ENCODE measurements at regions of chr12 and their contacts with region 1.

Region 1: DNA sequence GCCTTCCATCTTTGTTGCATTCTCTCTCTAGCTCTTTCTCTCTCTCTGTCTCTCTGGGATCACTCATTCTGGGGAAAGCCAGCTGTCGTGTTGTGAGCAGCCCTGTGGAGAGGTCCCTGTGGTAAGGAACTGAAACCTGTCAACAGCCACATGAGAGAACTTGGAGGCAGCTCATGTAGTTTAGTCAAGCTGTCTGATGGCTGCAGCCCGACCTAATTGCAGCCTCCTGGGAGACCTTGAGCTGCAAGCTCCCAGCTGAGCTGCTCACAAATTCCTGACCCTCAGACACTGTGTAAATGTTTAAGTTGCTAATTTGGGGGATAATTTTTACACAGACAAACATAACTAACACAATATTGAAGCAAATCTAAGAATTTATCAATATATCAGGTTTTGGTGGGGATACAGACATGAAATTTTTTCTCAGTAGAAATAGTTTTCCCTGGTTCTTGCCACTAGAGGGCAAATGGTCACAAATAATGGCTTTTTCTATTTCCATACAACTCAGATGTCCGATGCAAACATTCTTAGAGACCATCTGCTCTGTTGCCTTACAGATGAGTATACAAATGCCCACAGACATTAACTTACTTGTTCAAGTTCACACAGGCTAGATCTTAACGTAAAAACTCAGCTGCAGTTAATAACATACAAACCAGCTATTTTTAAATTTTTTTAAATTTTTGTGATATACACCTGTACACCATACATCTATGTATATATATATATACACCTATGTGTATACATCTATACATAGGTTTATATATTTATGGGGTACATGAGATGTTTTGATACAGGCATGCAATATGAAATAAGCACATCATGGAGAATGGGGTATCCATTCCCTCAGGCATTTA is 15.5 kb upstream of the KRR1 start:
- DNase-seq: peak; percentile 3 to 40
- H3K4me3 ChIP-seq: no peak overlapping the region
- H3K27ac ChIP-seq: no peak overlapping the region
- H3K4me1 ChIP-seq: no peaks in the 10 kb centered on the region; the same call in 1 of the 2 replicates
- H3K27me3 ChIP-seq: no peaks in the 10 kb centered on the region
- CTCF ChIP-seq: peak; percentile 82

Region 2: DNA sequence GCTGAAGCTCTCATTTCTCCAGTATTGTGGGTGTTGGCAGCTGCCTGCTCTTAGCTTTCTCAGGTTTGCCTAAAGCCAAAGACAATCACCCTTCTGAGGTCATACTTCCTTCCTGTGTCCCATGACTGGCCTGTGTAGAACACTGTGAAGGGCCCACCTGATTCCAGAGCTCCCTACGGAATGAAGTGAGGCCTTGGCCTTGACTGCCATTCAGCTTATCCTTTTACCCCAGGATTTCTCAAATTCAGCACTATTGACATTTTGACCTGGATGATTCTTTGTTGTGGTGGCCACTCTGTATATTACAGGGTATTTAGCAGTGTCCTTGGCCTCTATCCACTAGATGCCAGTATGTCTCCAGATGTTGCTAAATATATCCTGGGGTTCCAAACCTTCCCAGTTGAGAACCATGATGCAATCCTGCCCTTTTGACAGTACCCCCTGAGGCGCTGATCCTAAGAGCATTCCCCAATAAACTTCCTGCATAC is 96.8 kb after region 1 on chr12:
- CTCF ChIA-PET with region 1: no interaction called
- POLR2A ChIA-PET with region 1: no interaction called
- intact Hi-C with region 1: loop called (anchors 10 kb)
- DNase-seq: peak; percentile 33 to 69
- H3K4me3 ChIP-seq: no peak overlapping the region
- H3K27ac ChIP-seq: peak overlapping the region; percentile 62
- H3K4me1 ChIP-seq: peaks cover 16% of the 10 kb centered on the region
- H3K27me3 ChIP-seq: no peaks in the 10 kb centered on the region
- CTCF ChIP-seq: peak; percentile 54; the same call in 1 of the 2 replicates

Region 3: DNA sequence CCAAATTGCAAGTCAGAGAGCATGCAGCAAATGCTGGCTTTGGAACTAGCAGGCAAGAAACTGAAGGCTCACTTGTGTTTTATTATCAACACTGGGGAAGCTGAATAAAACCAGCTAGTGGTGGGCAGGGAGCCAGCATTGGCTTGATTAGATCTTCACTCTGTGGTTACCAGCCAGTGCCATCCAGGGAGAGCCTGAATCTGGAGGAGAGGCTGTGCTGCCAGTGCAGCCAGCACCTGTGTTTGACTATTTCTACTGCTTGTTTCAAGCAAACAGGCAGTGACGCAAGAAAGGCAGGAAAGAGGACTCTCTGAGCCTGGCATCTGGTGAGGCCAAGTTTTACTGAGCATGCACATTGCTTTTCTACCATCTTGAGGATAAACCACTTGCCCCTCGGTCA is 257.7 kb after region 1 on chr12:
- CTCF ChIA-PET with region 1: no interaction called
- POLR2A ChIA-PET with region 1: no interaction called
- intact Hi-C with region 1: loop called (anchors 10 kb)
- DNase-seq: peak; percentile 83 to 84
- H3K4me3 ChIP-seq: no peak overlapping the region
- H3K27ac ChIP-seq: peak overlapping the region; percentile 21; the same call in 1 of the 2 replicates
- H3K4me1 ChIP-seq: peaks cover 40% of the 10 kb centered on the region
- H3K27me3 ChIP-seq: no peaks in the 10 kb centered on the region
- CTCF ChIP-seq: no peak

Region 4: DNA sequence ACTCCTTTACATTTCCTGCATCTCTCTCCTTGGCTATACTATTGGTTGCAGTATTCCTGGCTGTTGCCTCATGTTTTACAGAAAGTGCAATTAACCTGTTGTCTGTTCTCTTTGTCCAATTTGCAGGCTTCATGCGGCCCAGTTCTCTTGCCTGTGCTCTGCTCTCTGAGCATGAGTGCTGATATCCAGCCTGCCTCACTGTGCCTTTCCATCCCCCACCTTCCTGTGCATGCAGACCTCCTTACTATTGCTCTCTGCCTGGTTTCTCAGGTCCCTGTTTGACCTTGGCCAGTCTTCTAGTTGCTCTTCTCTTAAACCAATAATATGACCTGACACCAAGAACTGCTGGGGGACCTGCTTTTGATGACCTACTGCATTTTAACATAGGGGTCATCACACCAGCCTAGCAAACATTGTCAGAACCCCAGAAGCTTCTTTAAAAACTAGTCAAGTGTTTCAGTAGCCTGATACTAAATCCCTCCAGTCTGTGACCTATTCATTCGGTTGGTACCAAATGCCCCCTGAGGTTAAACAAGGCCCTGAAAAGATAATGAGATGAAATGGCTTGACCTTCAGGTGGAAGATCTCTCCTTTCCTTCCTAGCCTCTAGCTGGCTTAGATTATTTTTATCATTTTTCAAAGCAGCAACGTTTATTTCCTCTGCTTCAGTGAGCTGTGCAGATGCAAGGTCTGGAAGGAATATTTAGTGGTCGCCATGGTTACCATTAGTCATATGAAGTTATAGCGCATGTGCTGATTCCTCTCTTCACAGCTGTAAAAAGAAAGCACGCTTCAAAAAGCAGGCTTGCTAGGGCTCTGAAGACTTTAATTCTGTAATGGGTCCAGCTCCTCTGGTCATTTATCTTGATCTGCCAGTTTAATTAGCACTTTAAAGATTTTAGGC is 288.2 kb after region 1 on chr12:
- CTCF ChIA-PET with region 1: no interaction called
- POLR2A ChIA-PET with region 1: no interaction called
- intact Hi-C with region 1: loop called (anchors 5 kb)
- DNase-seq: peak; percentile 18 to 53
- H3K4me3 ChIP-seq: no peak overlapping the region
- H3K27ac ChIP-seq: no peak overlapping the region
- H3K4me1 ChIP-seq: peaks cover 10% of the 10 kb centered on the region
- H3K27me3 ChIP-seq: no peaks in the 10 kb centered on the region
- CTCF ChIP-seq: no peak